ENCODE measurements at regions of chr10 and their contacts with region 1.

Region 1: DNA sequence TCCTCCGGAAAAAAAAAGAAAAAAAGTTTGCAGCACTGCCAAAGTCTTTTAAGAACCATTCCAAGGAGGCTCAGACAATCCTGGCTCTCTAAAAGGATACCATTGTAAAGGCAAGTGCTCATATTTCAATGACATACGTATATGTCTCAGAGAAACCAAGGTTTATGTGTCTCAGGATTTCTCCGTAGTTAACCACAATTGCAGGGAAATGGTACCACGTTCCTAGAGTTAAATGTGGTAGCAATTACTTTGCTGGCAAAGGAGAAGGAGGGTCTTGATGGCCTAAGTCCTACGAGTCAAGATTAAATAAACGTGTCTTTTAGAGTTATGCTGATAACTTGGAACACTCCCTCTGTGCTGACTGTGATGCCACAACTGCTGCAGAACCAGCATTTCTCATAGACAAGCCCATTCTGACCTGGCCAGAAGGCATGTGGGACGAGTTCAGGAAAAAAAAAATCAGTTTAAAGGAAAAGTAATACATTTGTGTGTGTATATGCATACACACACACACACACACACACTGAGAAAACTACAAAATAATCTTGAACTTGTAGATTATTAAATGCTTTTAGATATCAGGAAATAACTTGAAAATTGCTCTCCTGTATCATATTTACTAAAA is 245.9 kb downstream of the FGFR2 start:
- DNase-seq: no peak
- H3K4me3 ChIP-seq: no peak overlapping the region
- H3K27ac ChIP-seq: no peak overlapping the region
- H3K4me1 ChIP-seq: no peaks in the 10 kb centered on the region
- H3K27me3 ChIP-seq: no peaks in the 10 kb centered on the region
- CTCF ChIP-seq: no peak

Region 2: GRCh38 chr10:121178996-121179395 is 173.3 kb before region 1 on chr10:
- intact Hi-C with region 1: loop called (anchors 5 kb)
- DNase-seq: no peak
- H3K4me3 ChIP-seq: no peak overlapping the region
- H3K27ac ChIP-seq: no peak overlapping the region
- H3K4me1 ChIP-seq: no peaks in the 10 kb centered on the region
- H3K27me3 ChIP-seq: no peaks in the 10 kb centered on the region
- CTCF ChIP-seq: no peak

Region 3: GRCh38 chr10:121764233-121764942 is 412.0 kb after region 1 on chr10:
- intact Hi-C with region 1: no loop called
- DNase-seq: no peak
- H3K4me3 ChIP-seq: no peak overlapping the region
- H3K27ac ChIP-seq: no peak overlapping the region
- H3K4me1 ChIP-seq: peaks cover 0 to 2% (median 0%) of the 10 kb centered on the region in 4 donors
- H3K27me3 ChIP-seq: no peaks in the 10 kb centered on the region
- CTCF ChIP-seq: no peak

Measured in tibial artery (tissue), 4 donors.